ENCODE measurements at regions of chr15 and their contacts with region 1.

Region 1: GRCh38 chr15:56869573-56869972 is 48.9 kb upstream of the TCF12 start:
- DNase-seq: no peak
- H3K4me3 ChIP-seq: no peak overlapping the region
- H3K4me3 Mint-ChIP-seq: no peak overlapping the region
- H3K27ac ChIP-seq: no peak overlapping the region
- H3K27ac Mint-ChIP-seq: no peak overlapping the region
- H3K4me1 ChIP-seq: no peaks in the 10 kb centered on the region
- H3K4me1 Mint-ChIP-seq: no peaks in the 10 kb centered on the region
- H3K27me3 ChIP-seq: no peaks in the 10 kb centered on the region
- H3K27me3 Mint-ChIP-seq: no peaks in the 10 kb centered on the region

Region 2: GRCh38 chr15:56496635-56497034 is 372.9 kb before region 1 on chr15:
- CTCF ChIA-PET with region 1: interaction called, 4 read pairs
- POLR2A ChIA-PET with region 1: no interaction called
- intact Hi-C with region 1: loop called (anchors 5 kb)
- DNase-seq: peak in 4 of 5 donors; percentile 24 to 41 (median 32)
- H3K4me3 ChIP-seq: no peak overlapping the region
- H3K4me3 Mint-ChIP-seq: no peak overlapping the region
- H3K27ac ChIP-seq: no peak overlapping the region
- H3K27ac Mint-ChIP-seq: no peak overlapping the region
- H3K4me1 ChIP-seq: no peaks in the 10 kb centered on the region
- H3K4me1 Mint-ChIP-seq: peaks cover 3 to 4% (median 4%) of the 10 kb centered on the region in 4 donors
- H3K27me3 ChIP-seq: no peaks in the 10 kb centered on the region
- H3K27me3 Mint-ChIP-seq: peaks cover 9 to 16% of the 10 kb centered on the region in 2 donors